K562 (cell line): ENCODE measurements at regions of chr19 and their contacts with region 1.

Region 1: DNA sequence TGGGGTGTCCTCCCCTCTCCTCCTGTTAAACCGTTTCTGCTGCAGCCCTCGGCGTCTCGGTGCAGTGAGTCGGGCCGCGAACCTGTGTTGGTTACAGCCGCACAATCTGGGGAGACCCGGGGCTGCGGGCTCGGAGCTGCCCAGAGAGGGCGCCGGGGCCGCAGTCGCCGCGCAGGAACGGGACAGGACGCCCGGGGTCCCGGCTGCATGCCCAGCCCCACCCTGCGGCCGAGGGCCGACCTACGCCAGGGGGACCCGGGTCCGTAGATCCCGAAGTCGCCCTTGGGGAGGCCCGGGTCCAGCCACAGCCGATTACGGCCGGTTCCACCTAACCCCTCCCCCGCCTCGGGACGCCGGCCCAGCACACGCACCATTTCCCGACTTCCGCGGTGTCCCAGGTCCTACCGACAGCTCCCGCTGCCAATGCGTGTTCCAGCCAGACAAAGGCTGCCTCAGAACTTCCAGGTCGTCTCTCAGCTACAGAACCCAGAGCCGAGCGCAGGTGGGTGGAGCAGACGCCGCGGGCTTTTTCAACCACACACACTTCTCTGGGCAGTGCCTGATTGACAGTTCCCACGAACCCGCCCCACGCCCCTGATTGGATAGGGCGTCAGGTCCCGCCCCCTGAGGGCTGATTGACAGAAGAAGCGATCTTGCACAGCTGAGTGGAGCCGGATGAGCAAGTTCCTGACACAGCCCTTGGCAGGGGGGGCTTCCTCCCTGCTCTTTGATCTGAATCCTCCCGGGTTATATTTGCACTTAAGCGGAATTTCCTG is at the start of gene ZNF443:
- DNase-seq: peak; percentile 90 to 98 (median 92)
- ATAC-seq: peak; percentile 98
- H3K4me3 ChIP-seq: peak within 1 kb of the TSS; percentile 59
- H3K27ac ChIP-seq: peak within 1 kb of the TSS; percentile 77
- H3K4me1 ChIP-seq: peaks cover 0 to 10% of the 10 kb centered on the region in 2 experiments; a peak in 2 of 5 replicates
- H3K27me3 ChIP-seq: no peaks in the 10 kb centered on the region
- CTCF ChIP-seq: no peak
- EP300 ChIP-seq: no peak
- POLR2A ChIP-seq: peak; percentile 69
- RAD21 ChIP-seq: 0 out of 4 replicates have a peak, but pooled peaks of 1 of the 2 experiments have one; percentile 4
- polyA plus RNA-seq, gene ZNF443: 2.0 to 4.0 TPM

Region 2: DNA sequence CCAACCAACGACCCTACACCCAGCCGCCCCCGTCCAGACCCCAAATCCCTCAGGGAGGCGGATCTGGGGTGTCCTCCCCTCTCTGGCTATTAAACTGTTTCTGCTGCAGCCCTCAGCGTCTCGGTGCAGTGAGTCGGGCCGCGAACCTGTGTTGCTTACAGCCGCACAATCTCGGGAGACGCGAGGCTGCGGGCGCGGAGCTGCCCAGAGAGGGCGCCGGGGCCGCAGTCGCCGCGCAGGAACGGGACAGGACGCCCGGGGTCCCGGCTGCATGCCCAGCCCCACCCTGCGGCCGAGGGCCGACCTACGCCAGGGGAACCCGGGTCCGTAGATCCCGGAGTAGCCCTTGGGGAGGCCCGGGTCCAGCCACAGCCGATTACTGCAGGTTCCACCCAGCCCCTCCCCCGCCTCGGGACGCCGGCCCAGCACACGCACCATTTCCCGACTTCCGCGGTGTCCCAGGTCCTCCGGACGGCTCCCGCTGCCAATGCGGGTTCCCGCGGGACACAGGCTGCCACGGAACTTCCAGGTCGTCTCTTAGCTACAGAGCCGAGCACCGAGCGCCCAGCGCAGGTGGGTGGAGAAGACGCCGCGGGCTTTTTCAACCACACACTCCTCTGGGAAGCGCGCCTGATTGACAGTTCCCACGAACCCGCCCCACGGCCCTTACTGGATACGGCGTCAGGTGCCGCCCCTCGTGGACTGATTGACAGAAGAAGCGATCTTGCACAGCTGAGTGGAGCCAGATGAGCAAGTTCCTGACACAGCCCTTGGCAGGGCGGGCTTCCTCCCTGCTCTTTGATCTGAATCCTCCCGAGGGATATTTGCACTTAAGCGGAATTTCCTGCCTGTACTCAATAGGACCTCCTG is 39.9 kb before region 1 on chr19 and contains the start of gene ZNF799:
- CTCF ChIA-PET with region 1: no interaction called
- POLR2A ChIA-PET with region 1: interaction called, 4 read pairs
- in situ Hi-C with region 1: loop called (anchors 5 kb)
- intact Hi-C with region 1: no loop called
- DNase-seq: peak; percentile 78 to 97 (median 81)
- ATAC-seq: peak; percentile 98
- H3K4me3 ChIP-seq: peak within 1 kb of the TSS; percentile 71
- H3K27ac ChIP-seq: peak within 1 kb of the TSS; percentile 70
- H3K4me1 ChIP-seq: peaks cover 4 to 12% of the 10 kb centered on the region in 2 experiments; a peak in 2 of 5 replicates
- H3K27me3 ChIP-seq: no peaks in the 10 kb centered on the region
- CTCF ChIP-seq: peak in 1 of 3 experiments; percentile 25; a peak in 3 of 6 replicates
- EP300 ChIP-seq: no peak
- POLR2A ChIP-seq: peak; percentile 74
- RAD21 ChIP-seq: 0 out of 4 replicates have a peak, but pooled peaks of 1 of the 2 experiments have one; percentile 17
- polyA plus RNA-seq, gene ZNF799: 0.63 to 2.2 TPM